ENCODE measurements at regions of chr10 and their contacts with region 1.

Region 1: GRCh38 chr10:93397020-93397419 is 85.1 kb downstream of the MYOF start:
- DNase-seq: peak; percentile 61
- ATAC-seq: peak; percentile 69
- H3K4me3 ChIP-seq: no peak overlapping the region
- H3K27ac ChIP-seq: peak overlapping the region; percentile 67; the same call in 1 of the 2 replicates
- H3K4me1 ChIP-seq: peaks cover 16% of the 10 kb centered on the region
- H3K27me3 ChIP-seq: no peaks in the 10 kb centered on the region
- CTCF ChIP-seq: no peak
- POLR2A ChIP-seq: no peak
- RAD21 ChIP-seq: no peak

Region 2: DNA sequence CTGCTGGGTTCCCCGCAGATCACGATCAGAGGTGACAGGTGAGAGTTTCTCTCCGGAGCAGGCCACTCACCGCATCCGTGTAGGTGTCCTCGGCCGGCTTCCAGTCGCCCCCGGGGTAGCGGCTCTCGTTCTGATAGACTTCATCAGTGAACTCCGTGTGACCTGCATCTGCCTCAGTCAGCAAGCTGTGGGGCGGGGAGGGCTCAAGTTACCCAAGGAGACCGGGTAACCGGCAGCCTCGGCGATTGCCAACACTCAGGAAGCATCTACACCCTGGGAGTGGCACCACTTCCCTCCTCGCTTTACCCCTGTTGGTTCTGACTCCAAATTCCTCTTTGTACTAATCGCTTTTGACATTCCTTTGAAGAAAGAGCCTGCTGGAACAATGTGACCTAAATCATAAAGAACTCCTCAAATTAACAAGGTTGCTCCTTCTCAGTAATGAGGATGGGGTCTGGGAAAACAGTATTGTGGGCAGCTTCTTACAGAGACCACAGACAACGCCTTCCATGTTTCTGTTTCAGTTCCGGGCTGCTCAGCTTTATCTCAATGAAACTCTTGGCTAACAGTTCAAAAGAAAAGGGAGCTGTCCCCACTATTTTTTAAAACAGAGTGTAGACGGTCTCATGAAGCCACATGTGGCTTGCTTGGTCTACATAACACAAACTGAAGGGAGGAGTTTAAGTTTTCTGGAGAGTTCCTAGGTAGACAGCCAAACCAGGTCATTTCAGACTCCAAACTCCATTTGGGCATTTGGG is 33.0 kb before region 1 on chr10:
- CTCF ChIA-PET with region 1: no interaction called
- POLR2A ChIA-PET with region 1: no interaction called
- dilution Hi-C with region 1: no loop called
- in situ Hi-C with region 1: no loop called
- intact Hi-C with region 1: no loop called
- DNase-seq: no peak
- ATAC-seq: no peak
- H3K4me3 ChIP-seq: no peak overlapping the region
- H3K27ac ChIP-seq: no peak overlapping the region
- H3K4me1 ChIP-seq: no peaks in the 10 kb centered on the region
- H3K27me3 ChIP-seq: no peaks in the 10 kb centered on the region
- CTCF ChIP-seq: no peak
- POLR2A ChIP-seq: no peak
- RAD21 ChIP-seq: no peak

Region 3: GRCh38 chr10:93383562-93383981 is 13.4 kb before region 1 on chr10:
- CTCF ChIA-PET with region 1: interaction called, 3 read pairs
- POLR2A ChIA-PET with region 1: no interaction called
- dilution Hi-C with region 1: no loop called
- in situ Hi-C with region 1: no loop called
- intact Hi-C with region 1: loop called (anchors 2 kb)
- DNase-seq: peak; percentile 98
- ATAC-seq: peak; percentile 91
- H3K4me3 ChIP-seq: no peak overlapping the region
- H3K27ac ChIP-seq: peak overlapping the region; percentile 92
- H3K4me1 ChIP-seq: peaks cover 26% of the 10 kb centered on the region
- H3K27me3 ChIP-seq: no peaks in the 10 kb centered on the region
- CTCF ChIP-seq: no peak
- POLR2A ChIP-seq: no peak
- RAD21 ChIP-seq: 0 out of 2 replicates have a peak, but pooled peaks have one; percentile 4

Measured in IMR-90 (cell line).